ENCODE measurements at regions of chr2 and their contacts with region 1.

Region 1: DNA sequence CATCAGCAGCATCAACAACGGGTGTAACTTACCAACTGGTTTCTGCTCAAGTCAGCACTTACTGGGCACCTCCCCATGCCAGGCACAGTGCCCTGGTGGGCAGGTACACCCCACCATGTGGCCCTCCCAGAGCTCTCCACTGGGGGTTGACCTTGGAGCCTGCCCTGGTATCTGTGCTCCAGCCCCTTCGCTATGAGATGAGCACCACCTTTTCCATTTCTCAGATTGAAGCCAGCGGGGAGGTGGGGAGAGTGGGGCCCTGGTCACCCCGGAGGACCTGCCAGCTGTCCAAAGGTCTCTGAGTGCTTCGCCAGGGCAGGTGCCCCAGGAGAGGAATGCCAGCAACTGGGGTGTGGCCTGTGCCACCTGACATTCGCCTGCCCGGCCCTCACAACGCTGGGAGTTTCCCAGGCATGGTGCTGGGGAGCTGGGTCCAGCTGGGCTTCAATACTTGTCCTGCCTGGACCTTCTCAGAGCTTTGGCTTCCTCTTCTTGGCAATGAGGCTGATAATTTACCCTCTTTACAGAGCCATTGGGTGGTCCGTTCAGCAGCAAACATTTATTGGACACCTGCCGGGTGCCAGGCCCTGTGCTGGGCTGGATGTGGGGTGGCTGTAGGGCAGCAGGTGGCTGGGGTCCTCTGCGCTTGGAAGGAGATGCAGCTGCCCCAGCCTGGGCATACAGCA is 5.9 kb upstream of the ZAP70 start:
- DNase-seq: peak in 1 of 6 donors; percentile 41
- ATAC-seq: peak in 3 of 4 donors; percentile 29 to 79 (median 41)
- H3K4me3 ChIP-seq: no peak overlapping the region
- H3K27ac ChIP-seq: no peak overlapping the region
- H3K4me1 ChIP-seq: no peaks in the 10 kb centered on the region
- H3K27me3 ChIP-seq: no peaks in the 10 kb centered on the region
- CTCF ChIP-seq: no peak

Region 2: DNA sequence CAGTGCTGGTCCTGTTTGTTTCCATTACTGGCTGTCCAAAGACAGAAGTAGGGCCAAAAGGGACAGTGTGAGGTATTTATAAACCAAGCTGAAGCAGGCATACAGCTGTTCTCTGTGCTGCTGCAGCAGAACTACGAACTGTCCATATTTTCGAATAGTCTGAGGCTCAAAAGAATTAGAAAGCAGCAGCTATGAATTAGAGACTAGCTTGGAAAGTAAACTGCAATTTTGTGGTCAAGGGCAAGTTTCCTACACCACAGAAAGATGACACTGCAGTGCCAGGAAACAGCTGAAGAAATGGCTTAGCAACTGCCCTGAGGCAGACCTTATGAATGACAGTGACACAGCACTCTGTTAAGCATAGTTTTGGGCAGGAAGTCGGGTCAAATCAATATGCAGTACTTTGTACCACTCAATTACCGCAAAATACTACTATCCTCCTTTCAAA is 162.9 kb after region 1 on chr2:
- intact Hi-C with region 1: no loop called
- DNase-seq: no peak
- ATAC-seq: peak in 3 of 4 donors; percentile 71 to 88 (median 71)
- H3K4me3 ChIP-seq: no peak overlapping the region
- H3K27ac ChIP-seq: no peak overlapping the region
- H3K4me1 ChIP-seq: peaks cover 0 to 11% (median 5%) of the 10 kb centered on the region in 3 donors
- H3K27me3 ChIP-seq: no peaks in the 10 kb centered on the region
- CTCF ChIP-seq: no peak

Region 3: GRCh38 chr2:97935719-97936161 is 228.2 kb after region 1 on chr2:
- intact Hi-C with region 1: no loop called
- DNase-seq: no peak
- ATAC-seq: peak; percentile 58 to 64 (median 60)
- H3K4me3 ChIP-seq: no peak overlapping the region
- H3K27ac ChIP-seq: no peak overlapping the region
- H3K4me1 ChIP-seq: peaks cover 9 to 41% (median 39%) of the 10 kb centered on the region in 3 donors
- H3K27me3 ChIP-seq: no peaks in the 10 kb centered on the region
- CTCF ChIP-seq: no peak

Region 4: GRCh38 chr2:98379672-98380535 is 672.4 kb after region 1 on chr2:
- intact Hi-C with region 1: loop called in 1 of 3 experiments (anchors 5 kb)
- DNase-seq: no peak
- ATAC-seq: no peak
- H3K4me3 ChIP-seq: no peak overlapping the region
- H3K27ac ChIP-seq: no peak overlapping the region
- H3K4me1 ChIP-seq: peaks cover 0 to 6% (median 0%) of the 10 kb centered on the region in 3 donors
- H3K27me3 ChIP-seq: no peaks in the 10 kb centered on the region
- CTCF ChIP-seq: no peak

Measured in pancreas (tissue), 10 donors.